ENCODE measurements at regions of chr9 and their contacts with region 1.

Region 1: DNA sequence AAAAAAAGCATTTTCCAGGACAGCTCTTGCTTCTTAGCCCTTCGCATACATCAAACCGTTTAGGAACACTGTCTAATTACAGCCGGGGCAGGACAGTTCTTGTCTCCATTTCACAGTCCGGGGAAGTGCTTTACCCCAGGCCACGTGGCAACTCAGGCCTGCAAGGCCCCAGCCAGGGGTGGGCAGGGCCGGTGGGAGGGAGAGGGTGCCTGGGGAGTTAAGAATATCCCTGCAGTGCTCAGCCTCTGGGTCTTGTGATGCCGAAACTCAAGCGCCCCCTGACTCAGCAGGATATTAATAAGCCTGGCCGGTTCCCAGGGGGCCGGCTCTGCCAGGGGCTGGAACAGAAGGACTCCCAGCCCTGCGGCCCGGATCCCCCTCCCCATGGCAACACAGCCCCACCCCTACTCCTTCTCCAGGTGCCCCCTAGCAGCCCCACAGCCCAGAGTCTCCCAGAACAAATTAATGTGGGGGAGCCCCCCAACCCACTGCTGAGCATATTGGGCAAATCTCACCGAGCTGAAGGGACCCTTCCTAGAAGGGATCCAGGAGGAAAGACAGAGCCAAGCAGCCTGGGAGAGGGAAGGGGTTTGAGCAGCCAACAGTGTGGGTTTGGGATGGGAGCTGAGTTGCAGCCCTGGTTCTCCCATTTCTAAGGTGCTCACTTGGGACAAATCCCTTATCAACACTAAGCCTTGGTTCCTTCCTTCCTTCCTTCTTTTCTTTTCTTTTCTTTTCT is 45.3 kb downstream of the PLPP7 start:
- DNase-seq: peak; percentile 16
- H3K4me3 ChIP-seq: no peak overlapping the region
- H3K27ac ChIP-seq: no peak overlapping the region
- H3K27me3 ChIP-seq: no peaks in the 10 kb centered on the region
- CTCF ChIP-seq: no peak

Region 2: GRCh38 chr9:130880599-130881220 is 454.1 kb before region 1 on chr9:
- CTCF ChIA-PET with region 1: no interaction called
- POLR2A ChIA-PET with region 1: no interaction called
- DNase-seq: no peak
- H3K4me3 ChIP-seq: no peak overlapping the region
- H3K27ac ChIP-seq: no peak overlapping the region
- H3K27me3 ChIP-seq: no peaks in the 10 kb centered on the region
- CTCF ChIP-seq: no peak

Region 3: GRCh38 chr9:131056781-131057506 is 277.9 kb before region 1 on chr9:
- CTCF ChIA-PET with region 1: interaction called, 19 read pairs
- POLR2A ChIA-PET with region 1: no interaction called
- DNase-seq: no peak
- H3K4me3 ChIP-seq: no peak overlapping the region
- H3K27ac ChIP-seq: no peak overlapping the region
- H3K27me3 ChIP-seq: peaks cover 4% of the 10 kb centered on the region
- CTCF ChIP-seq: no peak

Region 4: DNA sequence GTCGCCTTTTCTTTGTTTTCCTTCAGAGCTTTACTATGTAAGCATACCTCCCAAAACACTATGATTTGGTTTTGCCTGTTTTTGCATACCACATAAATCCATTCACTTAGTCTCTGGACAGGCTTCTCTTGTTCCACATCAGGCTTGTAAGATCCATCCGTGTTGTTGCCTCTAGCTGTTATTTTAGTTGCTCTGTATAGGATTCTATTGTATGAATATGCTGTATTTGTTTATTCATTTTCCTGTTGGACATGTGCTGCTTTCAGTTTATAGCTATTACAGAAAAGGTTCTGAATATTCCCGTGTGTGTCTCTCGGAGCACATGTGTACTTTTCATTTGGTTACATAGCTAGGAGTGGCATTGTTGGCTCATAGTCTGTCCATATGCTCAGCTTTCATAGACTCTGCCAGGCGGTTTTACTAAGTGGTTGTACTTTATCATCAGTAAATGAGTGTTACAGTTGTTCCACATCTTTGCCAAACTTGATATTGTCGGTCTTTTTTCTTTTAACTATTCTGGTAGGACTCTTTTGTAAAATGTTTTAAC is 167.6 kb before region 1 on chr9:
- CTCF ChIA-PET with region 1: interaction called, 13 read pairs
- POLR2A ChIA-PET with region 1: no interaction called
- DNase-seq: no peak
- H3K4me3 ChIP-seq: no peak overlapping the region
- H3K27ac ChIP-seq: no peak overlapping the region
- H3K27me3 ChIP-seq: no peaks in the 10 kb centered on the region
- CTCF ChIP-seq: no peak

Region 5: DNA sequence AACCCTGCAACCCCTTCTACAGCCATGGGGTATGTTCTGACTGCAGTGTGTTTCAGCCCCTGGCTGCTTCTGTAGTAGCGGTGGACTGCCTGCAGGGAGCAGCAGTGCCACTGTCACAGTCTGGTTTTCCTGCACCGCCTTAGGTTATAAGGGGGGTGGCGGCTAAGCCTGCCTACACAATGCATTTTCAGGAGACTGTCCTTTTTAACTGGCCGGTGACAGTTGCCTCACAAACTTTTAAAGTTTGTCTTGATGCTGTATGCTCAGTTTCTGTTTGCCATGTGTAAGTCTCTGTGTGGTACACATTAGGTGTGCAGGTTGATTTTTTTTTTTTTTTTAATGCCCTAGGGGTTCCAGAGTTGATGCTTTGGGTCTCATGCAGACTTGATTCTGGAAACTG is 156.4 kb before region 1 on chr9:
- CTCF ChIA-PET with region 1: interaction called, 199 read pairs
- POLR2A ChIA-PET with region 1: interaction called, 7 read pairs
- DNase-seq: peak; percentile 74
- H3K4me3 ChIP-seq: no peak overlapping the region
- H3K27ac ChIP-seq: peak overlapping the region; percentile 89
- H3K27me3 ChIP-seq: no peaks in the 10 kb centered on the region
- CTCF ChIP-seq: peak; percentile 98

Region 6: DNA sequence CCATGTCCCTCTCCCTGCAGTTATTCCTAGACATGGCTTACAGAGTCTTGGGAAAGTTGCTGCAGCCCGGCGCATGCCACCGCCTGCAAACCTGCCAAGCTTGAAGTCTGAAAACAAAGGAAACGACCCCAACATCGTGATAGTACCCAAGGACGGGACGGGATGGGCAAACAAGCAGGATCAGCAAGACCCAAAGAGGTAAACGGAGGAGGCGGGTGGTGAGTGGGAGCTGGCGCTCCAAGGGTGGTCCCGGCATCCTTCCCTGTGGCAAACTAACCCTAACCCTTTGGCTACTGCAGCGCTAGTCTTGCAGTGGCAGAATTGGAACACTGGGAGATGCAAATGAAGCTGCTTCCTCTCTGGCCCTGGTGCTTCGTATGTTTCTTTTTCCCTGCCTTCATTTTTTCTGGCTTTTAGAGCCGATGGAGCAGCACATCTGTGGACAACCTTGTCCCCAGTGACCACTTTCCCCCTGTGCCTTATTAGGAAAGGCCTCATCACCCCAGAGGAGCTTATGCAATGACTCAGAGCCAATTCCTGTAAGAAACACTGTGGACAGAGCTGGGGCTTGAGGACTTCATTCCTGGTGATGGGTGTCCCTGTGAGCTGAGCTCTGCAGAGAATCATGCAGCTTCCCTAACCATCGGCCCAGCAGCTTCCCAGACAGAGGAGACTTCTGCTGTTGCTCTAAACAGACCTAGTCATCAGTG is 98.0 kb after region 1 on chr9:
- CTCF ChIA-PET with region 1: interaction called, 3 read pairs
- POLR2A ChIA-PET with region 1: interaction called, 12 read pairs
- DNase-seq: peak; percentile 77
- H3K4me3 ChIP-seq: no peak overlapping the region
- H3K27ac ChIP-seq: peak overlapping the region; percentile 81
- H3K27me3 ChIP-seq: no peaks in the 10 kb centered on the region
- CTCF ChIP-seq: no peak

Region 7: GRCh38 chr9:131478421-131478868 is 143.6 kb after region 1 on chr9:
- CTCF ChIA-PET with region 1: no interaction called
- POLR2A ChIA-PET with region 1: no interaction called
- DNase-seq: no peak
- H3K4me3 ChIP-seq: no peak overlapping the region
- H3K27ac ChIP-seq: no peak overlapping the region
- H3K27me3 ChIP-seq: no peaks in the 10 kb centered on the region
- CTCF ChIP-seq: peak; percentile 59